ENCODE measurements at regions of chr10 and their contacts with region 1.

Region 1: DNA sequence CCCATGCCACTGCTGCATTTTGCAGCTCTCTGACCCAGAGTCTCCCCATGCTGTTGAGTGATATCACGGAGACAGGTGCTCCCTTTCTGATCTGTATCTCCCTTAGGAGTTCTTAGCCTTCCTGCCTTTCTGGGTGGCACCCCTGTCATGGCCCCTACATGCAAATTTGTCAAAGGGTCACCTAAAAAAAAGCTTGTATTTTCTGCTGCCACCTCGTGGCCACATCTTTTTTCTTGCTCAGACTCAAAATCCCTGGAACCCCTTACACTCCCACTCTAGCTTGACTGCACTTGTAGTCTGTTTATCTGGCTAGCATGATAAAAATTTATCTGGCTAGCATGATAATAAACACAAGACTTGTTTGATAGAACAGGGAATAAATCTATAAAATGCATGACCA is 809.1 kb downstream of the SORCS1 start:
- DNase-seq: peak; percentile 8
- H3K4me3 ChIP-seq: no peak overlapping the region
- H3K27ac ChIP-seq: no peak overlapping the region
- H3K4me1 ChIP-seq: no peaks in the 10 kb centered on the region
- H3K27me3 ChIP-seq: no peaks in the 10 kb centered on the region
- CTCF ChIP-seq: peak; percentile 23; the same call in 1 of the 2 replicates
- EP300 ChIP-seq: no peak
- RAD21 ChIP-seq: peak; percentile 38; the same call in 1 of the 2 replicates

Region 2: DNA sequence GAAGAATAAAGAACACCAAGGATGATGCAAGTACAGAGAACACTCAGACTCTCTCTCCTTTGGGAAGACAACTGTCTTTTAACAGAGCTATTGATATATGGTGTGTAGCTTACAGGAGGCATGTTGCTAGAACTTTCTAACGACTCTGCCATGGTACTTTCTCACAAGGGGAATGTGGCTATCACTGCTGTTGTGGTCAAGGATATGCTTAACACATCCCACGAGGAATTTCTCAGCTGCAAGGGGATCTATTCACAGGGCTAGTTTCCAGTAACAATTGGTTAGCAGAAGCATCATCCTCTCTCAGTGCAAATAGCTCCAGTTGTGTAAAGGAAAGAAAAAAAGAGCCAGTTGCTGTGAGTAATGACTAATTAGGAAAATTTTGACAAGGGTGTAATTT is 17.0 kb before region 1 on chr10:
- CTCF ChIA-PET with region 1: interaction called, 17 read pairs
- POLR2A ChIA-PET with region 1: no interaction called
- DNase-seq: no peak
- H3K4me3 ChIP-seq: no peak overlapping the region
- H3K27ac ChIP-seq: no peak overlapping the region
- H3K4me1 ChIP-seq: no peaks in the 10 kb centered on the region
- H3K27me3 ChIP-seq: no peaks in the 10 kb centered on the region
- CTCF ChIP-seq: no peak
- EP300 ChIP-seq: no peak
- RAD21 ChIP-seq: no peak

Region 3: DNA sequence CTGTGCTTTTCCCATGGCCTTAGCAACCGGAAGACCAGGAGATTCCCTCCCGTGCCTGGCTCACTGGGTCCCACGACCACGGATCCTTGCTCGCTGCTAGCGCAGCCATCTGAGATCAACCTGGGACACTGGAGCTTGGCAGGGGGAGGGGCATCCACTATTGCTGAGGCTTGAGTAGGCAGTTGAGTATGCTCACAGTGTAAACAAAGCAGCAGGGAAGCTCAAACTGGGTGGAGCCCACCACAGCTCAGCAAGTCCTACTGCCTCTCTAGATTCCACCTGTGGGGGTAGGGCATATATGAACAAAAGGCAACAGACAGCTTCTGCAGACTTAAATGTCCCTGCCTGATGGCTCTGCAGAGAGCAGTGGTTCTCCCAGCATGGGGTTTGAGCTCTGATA is 112.1 kb after region 1 on chr10:
- CTCF ChIA-PET with region 1: no interaction called
- POLR2A ChIA-PET with region 1: no interaction called
- DNase-seq: no peak
- H3K4me3 ChIP-seq: no peak overlapping the region
- H3K27ac ChIP-seq: no peak overlapping the region
- H3K4me1 ChIP-seq: no peaks in the 10 kb centered on the region
- H3K27me3 ChIP-seq: no peaks in the 10 kb centered on the region
- CTCF ChIP-seq: no peak
- EP300 ChIP-seq: no peak
- RAD21 ChIP-seq: no peak